Heart left ventricle (tissue), 16 donors: ENCODE measurements at regions of chr11 and their contacts with region 1.

Region 1: GRCh38 chr11:108069947-108070346 is 51.4 kb upstream of the ACAT1 start:
- DNase-seq: no peak
- ATAC-seq: peak in 1 of 4 donors; percentile 36
- H3K4me3 ChIP-seq: no peak overlapping the region
- H3K27ac ChIP-seq: peak overlapping the region in 3 of 12 donors; percentile 17 to 56 (median 45)
- H3K4me1 ChIP-seq: peaks cover 0 to 17% (median 2%) of the 10 kb centered on the region in 12 donors
- H3K27me3 ChIP-seq: no peaks in the 10 kb centered on the region
- CTCF ChIP-seq: no peak
- POLR2A ChIP-seq: no peak

Region 2: DNA sequence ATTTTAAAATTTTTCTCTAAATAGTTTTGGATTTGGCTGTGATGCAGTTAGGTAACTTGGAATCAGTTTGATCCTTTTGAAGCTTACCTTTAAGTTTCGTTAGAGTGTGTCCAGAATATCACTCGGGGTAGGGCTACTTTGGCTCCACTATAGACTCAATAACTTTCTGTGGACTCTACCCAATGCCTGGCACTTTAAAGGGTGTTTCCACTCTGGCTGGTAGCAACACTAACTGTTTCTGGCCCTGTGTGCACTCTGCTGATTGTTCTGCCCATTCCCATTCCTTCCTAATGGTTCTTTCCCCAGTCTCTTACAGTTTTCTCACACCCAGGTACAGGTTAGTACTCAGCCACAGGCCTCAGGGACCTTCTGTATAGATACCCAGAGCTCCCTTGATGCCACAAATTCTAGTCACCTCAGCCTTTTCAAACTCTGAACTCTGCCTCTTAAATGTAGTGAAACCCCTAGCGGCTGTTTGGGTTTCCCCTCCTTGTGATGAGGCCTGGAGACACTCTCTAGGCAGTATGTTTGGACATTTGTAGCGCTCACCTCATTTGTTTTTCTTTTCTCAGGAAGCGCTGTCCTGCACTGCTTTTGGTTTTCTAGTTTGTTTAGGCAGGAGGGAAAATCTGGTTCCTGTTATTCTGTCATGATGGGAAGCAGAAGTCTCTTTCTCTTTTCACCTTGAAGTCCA is 44.4 kb before region 1 on chr11:
- intact Hi-C with region 1: no loop called
- DNase-seq: no peak
- ATAC-seq: no peak
- H3K4me3 ChIP-seq: no peak overlapping the region
- H3K27ac ChIP-seq: peak overlapping the region in 1 of 12 donors; percentile 55
- H3K4me1 ChIP-seq: peaks cover 0 to 27% (median 7%) of the 10 kb centered on the region in 12 donors
- H3K27me3 ChIP-seq: no peaks in the 10 kb centered on the region
- CTCF ChIP-seq: no peak
- POLR2A ChIP-seq: no peak

Region 3: GRCh38 chr11:108135845-108136544 is 66.0 kb after region 1 on chr11:
- intact Hi-C with region 1: loop called in 1 of 10 experiments (anchors 10 kb)
- DNase-seq: no peak
- ATAC-seq: no peak
- H3K4me3 ChIP-seq: no peak overlapping the region
- H3K27ac ChIP-seq: no peak overlapping the region
- H3K4me1 ChIP-seq: peaks cover 0 to 25% (median 3%) of the 10 kb centered on the region in 12 donors
- H3K27me3 ChIP-seq: no peaks in the 10 kb centered on the region
- CTCF ChIP-seq: peak in 1 of 12 donors; percentile 19
- POLR2A ChIP-seq: no peak